ENCODE measurements at regions of chr22 and their contacts with region 1.

Region 1: DNA sequence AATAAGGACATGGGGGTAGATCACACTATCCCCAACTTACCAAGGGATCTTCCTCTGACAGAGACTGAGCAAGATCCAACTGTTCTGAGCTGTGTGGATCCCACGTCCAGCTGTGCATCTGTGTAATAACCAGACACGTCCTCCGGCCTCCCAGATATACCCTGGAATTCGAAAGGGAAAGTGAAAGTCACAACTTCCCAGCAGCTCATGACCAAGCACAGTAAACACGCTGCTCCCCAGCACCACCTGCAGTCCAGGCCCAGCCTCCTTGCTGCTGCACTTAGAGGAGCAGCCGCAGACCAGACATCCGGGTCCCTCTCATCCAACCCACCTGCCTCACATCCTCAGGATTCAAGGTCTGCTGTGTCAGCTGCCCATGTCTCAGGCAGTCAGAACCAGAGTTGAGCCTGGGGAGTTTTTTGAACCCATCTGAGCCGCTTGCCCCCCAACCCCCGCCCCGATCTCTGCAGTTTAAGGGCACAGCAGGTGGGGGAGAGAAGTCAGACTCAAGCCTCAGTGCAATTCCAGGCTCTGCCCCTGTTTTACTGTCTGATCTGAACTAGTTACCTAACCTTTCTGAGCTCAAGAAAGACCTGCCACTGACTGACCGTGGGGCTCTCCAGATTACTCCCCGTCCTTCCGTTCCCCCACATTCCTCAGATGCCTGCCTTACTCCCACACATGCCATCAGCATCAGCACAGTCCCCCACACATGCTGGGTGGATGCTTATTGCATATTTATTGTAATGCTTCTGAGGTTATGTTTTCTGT is at the start of gene APOL2:
- DNase-seq: peak; percentile 94
- H3K4me3 Mint-ChIP-seq: peak within 1 kb of the TSS; percentile 98
- H3K27ac Mint-ChIP-seq: peak within 1 kb of the TSS; percentile 99
- H3K4me1 Mint-ChIP-seq: peaks cover 44% of the 10 kb centered on the region
- H3K27me3 Mint-ChIP-seq: no peaks in the 10 kb centered on the region
- total RNA-seq, gene APOL2: 53.8 to 55.0 TPM

Region 2: DNA sequence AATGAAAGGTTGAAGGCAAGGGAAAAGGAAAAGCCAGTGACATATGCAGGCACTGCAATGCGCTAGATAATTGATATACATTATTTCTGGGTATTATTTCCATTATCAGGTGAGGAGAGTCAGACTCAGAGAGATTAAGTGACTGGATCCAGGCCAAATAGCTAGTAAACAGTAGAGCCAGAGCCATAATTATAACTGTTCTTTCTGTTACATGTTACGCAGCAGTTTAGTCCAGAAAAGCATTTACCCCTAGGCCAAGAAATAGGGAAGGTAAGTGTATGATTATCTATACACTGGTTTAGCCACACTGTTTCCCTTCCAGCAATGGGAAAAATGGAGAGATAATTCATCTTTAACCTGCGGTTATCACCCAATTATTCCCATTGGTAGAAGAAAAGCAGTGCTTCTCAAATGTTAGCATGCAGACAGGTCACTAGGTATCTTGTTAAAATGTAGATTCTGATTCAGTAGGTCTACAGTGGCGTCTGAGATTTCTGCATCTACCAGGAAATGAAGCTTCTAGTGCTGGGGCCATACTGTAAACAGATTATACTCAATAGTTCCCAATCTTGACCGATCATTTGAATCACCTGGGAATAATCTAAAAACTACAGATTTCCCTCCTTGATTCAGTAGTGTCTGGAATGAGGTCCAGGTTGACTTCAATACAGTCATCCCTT is 280.3 kb before region 1 on chr22:
- CTCF ChIA-PET with region 1: no interaction called
- intact Hi-C with region 1: no loop called
- DNase-seq: no peak
- H3K4me3 Mint-ChIP-seq: no peak overlapping the region
- H3K27ac Mint-ChIP-seq: no peak overlapping the region
- H3K4me1 Mint-ChIP-seq: no peaks in the 10 kb centered on the region
- H3K27me3 Mint-ChIP-seq: peaks cover 2% of the 10 kb centered on the region

Region 3: DNA sequence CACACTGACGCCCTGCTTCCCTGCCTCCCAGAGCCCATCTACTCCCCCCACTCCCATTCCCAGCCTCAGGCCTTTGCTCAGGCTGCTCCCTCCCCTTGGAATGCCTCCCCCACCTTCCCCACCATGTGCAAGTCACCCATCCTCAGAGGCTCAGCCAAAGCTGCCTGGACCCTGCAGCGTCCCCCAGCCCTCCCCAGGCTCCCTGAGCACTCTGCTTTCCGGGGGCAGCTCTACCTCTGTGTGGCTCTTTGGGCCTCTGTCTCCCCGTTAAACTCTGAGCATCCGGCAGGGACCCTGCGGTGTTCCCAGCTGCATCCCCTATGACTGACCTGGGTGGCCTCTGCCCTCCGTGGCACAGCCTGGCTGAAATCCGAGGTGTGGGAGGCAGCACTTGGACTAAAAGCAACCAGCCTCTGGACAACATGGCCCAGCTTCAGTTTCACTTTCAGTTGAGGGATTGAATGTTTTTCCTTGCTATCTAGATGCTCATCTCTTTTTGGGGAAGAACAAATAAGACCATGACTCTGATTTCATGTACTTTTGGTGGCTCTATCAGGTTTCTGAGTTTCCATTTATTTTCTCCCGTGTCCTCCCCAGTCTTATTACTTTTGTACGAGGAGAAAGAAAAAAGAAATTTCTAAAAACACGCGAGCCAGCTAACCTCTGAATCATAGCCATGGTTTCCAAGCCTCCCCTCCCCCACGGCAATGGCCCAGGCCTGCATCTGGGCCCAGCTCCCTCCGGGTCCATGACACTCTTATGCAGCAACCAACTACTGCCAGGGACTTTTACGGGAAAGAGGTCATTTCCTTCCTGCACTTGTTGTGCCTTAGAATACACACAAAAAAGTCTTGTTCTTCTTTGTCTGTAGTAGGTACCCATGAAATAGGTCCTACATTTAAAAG is 82.8 kb before region 1 on chr22:
- CTCF ChIA-PET with region 1: no interaction called
- intact Hi-C with region 1: loop called (anchors 5 kb)
- DNase-seq: peak; percentile 92
- H3K4me3 Mint-ChIP-seq: peak overlapping the region; percentile 92
- H3K27ac Mint-ChIP-seq: peak overlapping the region; percentile 99
- H3K4me1 Mint-ChIP-seq: peaks cover 88% of the 10 kb centered on the region
- H3K27me3 Mint-ChIP-seq: no peaks in the 10 kb centered on the region

Region 4: GRCh38 chr22:36171941-36172340 is 67.6 kb before region 1 on chr22:
- CTCF ChIA-PET with region 1: no interaction called
- intact Hi-C with region 1: no loop called
- DNase-seq: no peak
- H3K4me3 Mint-ChIP-seq: no peak overlapping the region
- H3K27ac Mint-ChIP-seq: no peak overlapping the region
- H3K4me1 Mint-ChIP-seq: peaks cover 5% of the 10 kb centered on the region
- H3K27me3 Mint-ChIP-seq: no peaks in the 10 kb centered on the region

Region 5: GRCh38 chr22:36194971-36195370 is 44.6 kb before region 1 on chr22:
- CTCF ChIA-PET with region 1: interaction called, 7 read pairs
- intact Hi-C with region 1: loop called (anchors 5 kb)
- DNase-seq: peak; percentile 71
- H3K4me3 Mint-ChIP-seq: no peak overlapping the region
- H3K27ac Mint-ChIP-seq: no peak overlapping the region
- H3K4me1 Mint-ChIP-seq: peaks cover 13% of the 10 kb centered on the region
- H3K27me3 Mint-ChIP-seq: no peaks in the 10 kb centered on the region

Region 6: DNA sequence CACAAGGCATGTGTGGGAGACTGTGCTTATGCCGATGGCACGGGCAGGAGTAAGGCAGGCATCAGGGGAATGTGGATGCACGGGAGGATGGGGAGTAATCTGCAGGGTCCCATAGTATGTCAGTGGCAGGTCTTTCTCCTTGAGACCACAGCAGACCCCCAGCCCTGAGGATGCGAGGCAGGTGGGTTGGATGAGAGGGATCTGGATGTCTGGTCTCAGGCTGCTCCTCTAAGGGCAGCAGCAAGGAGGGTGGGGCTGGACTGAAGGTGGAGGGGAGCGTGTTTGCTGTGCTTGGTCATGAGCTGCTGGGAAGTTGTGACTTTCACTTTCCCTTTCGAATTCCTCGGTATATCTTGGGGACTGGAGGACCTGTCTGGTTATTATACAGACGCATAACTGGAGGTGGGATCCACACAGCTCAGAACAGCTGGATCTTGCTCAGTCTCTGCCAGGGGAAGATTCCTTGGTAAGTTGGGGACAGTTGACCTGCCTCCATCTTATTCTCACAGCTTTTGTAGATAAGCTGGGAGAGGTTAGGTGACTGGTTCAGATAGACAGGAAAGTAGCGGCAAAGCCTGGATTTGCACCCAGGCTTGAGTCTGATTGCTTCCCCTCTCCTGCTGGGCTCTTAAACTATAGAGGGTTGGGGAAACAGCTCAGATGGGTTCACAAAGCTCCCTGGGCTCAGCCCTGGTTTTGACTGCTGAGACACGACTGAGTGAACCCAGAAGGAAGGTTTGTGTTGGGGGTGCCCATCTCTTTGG is 13.3 kb after region 1 on chr22 and contains the start of gene APOL1:
- CTCF ChIA-PET with region 1: interaction called, 33 read pairs
- intact Hi-C with region 1: loop called (anchors 1 kb)
- DNase-seq: peak; percentile 63
- H3K4me3 Mint-ChIP-seq: peak within 1 kb of the TSS; percentile 87
- H3K27ac Mint-ChIP-seq: peak within 1 kb of the TSS; percentile 93
- H3K4me1 Mint-ChIP-seq: peaks cover 43% of the 10 kb centered on the region
- H3K27me3 Mint-ChIP-seq: no peaks in the 10 kb centered on the region
- total RNA-seq, gene APOL1: 17.4 to 22.0 TPM

Region 7: GRCh38 chr22:36277482-36278291 is 38.1 kb after region 1 on chr22:
- CTCF ChIA-PET with region 1: interaction called, 12 read pairs
- intact Hi-C with region 1: loop called (anchors 2 kb)
- DNase-seq: peak; percentile 81
- H3K4me3 Mint-ChIP-seq: no peak overlapping the region
- H3K27ac Mint-ChIP-seq: peak overlapping the region; percentile 58
- H3K4me1 Mint-ChIP-seq: peaks cover 23% of the 10 kb centered on the region
- H3K27me3 Mint-ChIP-seq: no peaks in the 10 kb centered on the region

Region 8: DNA sequence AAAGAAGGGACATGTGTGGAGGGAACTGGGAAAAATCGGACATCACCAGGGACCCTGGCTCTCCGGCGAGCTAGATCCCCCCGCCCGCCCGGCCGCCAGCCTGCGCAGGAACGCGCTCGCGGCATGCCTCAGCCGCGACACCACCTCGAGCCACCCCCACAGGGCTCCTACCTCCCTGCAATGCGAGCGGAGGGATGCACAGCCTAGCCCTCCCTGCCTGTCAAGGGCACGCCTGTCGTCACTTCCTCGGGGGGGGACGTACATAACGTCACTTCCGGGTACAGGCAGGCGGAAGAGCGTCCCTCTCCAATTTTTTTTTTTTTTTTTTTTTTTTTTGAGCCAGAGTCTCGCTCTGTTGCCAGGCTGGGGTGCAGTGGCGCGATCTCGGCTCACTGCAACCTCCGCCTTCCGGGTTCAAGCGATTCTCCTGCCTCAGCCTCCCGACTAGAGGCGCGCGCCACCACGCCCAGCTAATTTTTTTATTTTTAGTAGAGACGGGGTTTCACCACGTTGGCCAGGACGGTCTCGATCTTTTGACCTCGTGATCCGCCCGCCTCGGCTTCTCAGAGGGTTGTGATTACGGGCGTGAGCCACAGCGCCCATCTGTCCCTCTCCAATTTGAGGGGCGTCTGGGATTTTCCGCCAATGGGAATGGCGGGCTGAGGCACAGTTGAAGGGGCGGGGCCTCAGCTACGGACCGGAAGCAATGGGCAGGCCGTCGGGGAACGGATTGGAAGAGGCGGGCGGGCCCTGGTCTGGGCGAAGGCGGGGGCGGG is 242.0 kb after region 1 on chr22 and contains the start of gene TXN2:
- CTCF ChIA-PET with region 1: interaction called, 4 read pairs
- intact Hi-C with region 1: loop called (anchors 5 kb)
- DNase-seq: peak; percentile 98
- H3K4me3 Mint-ChIP-seq: peak within 1 kb of the TSS; percentile 95
- H3K27ac Mint-ChIP-seq: peak within 1 kb of the TSS; percentile 89
- H3K4me1 Mint-ChIP-seq: peaks cover 13% of the 10 kb centered on the region
- H3K27me3 Mint-ChIP-seq: no peaks in the 10 kb centered on the region
- total RNA-seq, gene TXN2: 108 to 113 TPM